PC-3 (cell line): ENCODE measurements at regions of chr7 and their contacts with region 1.

Region 1: DNA sequence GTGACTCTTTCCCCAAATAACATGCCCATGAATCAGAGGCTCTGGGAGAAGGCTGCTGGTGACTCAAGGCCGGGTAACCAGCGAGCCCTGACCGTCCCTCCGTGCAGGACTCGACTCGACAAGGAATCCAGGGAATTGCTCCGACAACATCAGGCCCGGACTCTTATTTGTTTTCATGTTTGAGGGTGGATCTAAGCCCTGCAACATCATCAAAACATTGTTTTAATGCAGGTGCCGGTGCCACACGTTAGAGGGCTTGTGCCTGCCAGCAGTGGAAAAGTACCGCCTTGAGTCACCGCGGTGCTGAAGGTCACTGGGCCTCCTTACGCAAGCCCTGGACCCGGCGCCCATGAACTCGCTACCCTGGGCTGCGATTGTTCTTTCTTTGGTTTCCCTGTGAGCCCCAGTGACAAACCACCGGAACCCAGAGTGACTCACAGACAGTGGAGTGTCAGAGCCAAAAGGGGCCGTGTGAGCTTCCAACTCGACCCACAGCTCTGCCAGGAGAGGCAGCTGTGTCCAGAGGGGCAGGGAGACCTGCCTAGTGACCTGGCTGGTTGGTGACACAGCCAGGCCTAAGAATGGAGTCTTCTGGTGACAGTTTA is 139.4 kb upstream of the SHH start:
- DNase-seq: peak; percentile 96
- ATAC-seq: peak; percentile 85
- H3K4me3 ChIP-seq: peak overlapping the region; percentile 41
- H3K27ac ChIP-seq: peak overlapping the region; percentile 97
- H3K4me1 ChIP-seq: peaks cover 44% of the 10 kb centered on the region
- H3K27me3 ChIP-seq: no peaks in the 10 kb centered on the region
- CTCF ChIP-seq: no peak

Region 2: DNA sequence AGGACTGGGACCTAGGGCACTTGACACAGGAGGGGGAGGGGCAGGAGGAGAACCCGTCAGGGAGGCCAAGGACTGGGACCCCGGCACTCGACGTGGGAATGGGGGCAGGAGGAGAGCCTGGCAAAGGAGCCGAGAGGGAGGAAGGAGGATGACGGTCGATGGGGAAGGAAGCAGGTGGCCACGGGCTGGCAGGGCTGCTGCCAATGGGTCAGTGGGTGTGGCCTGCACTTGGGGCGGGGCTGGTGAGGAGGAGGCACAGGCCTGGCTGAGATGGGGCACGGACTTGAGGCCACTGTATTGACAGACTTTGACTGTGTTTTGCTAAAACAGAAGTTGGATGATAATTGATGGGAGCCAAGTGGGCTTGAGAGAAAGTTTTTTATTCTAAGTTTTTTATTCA is 238.3 kb before region 1 on chr7:
- CTCF ChIA-PET with region 1: no interaction called
- POLR2A ChIA-PET with region 1: no interaction called
- intact Hi-C with region 1: no loop called
- DNase-seq: no peak
- ATAC-seq: no peak; the same call in 1 of the 2 replicates
- H3K4me3 ChIP-seq: no peak overlapping the region
- H3K27ac ChIP-seq: no peak overlapping the region
- H3K4me1 ChIP-seq: no peaks in the 10 kb centered on the region
- H3K27me3 ChIP-seq: no peaks in the 10 kb centered on the region
- CTCF ChIP-seq: no peak

Region 3: DNA sequence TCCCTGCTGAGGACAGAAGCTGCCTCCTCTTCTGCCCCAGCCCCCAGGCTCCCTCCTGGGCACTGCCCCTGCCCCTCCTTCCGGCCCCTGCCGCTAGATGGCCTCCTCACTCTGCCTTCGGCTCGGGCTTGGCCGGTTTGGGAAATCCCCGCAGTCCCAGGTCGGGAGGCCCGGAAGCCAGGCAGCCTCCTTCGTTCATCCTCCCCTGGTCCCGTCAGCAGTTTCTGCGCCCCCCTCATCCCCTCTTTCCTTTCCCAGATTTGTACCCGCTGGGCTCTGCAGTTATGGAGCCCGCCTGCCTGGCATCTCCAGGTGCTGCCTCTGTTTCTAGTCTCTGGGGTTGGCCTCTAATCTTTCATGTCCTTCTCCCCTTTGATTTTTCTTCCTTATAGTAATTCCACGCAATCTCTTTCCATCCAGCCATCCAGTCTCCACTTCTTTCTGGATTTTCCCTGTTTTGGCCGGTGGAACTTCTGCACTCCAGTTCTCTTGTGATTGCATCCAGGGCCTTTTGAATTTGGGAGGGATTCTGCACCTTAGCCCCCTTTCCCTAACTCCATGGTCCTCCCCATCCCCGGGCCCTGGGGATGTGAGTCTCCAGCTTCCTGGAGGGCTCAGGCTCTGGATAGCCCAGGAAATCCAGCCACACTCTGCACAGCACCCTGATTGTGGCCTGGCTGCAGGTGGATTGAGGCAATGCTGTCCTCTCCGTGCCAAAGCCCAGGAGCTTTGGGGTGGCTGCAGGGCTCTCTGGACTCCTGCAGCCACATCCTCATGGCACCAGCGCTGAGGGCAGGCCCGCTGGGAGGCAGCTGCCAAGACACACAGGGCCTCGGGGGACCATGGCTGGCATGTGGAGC is 136.1 kb before region 1 on chr7:
- CTCF ChIA-PET with region 1: interaction called, 3 read pairs
- POLR2A ChIA-PET with region 1: no interaction called
- intact Hi-C with region 1: loop called (anchors 5 kb)
- DNase-seq: peak; percentile 76
- ATAC-seq: peak; percentile 73
- H3K4me3 ChIP-seq: no peak overlapping the region
- H3K27ac ChIP-seq: no peak overlapping the region
- H3K4me1 ChIP-seq: peaks cover 21% of the 10 kb centered on the region
- H3K27me3 ChIP-seq: peaks cover 28% of the 10 kb centered on the region
- CTCF ChIP-seq: peak; percentile 74

Region 4: GRCh38 chr7:155860840-155861479 is 90.7 kb before region 1 on chr7:
- CTCF ChIA-PET with region 1: no interaction called
- POLR2A ChIA-PET with region 1: no interaction called
- intact Hi-C with region 1: loop called (anchors 5 kb)
- DNase-seq: peak; percentile 90
- ATAC-seq: peak; percentile 29
- H3K4me3 ChIP-seq: peak overlapping the region; percentile 44
- H3K27ac ChIP-seq: peak overlapping the region; percentile 66
- H3K4me1 ChIP-seq: peaks cover 42% of the 10 kb centered on the region
- H3K27me3 ChIP-seq: no peaks in the 10 kb centered on the region
- CTCF ChIP-seq: no peak

Region 5: DNA sequence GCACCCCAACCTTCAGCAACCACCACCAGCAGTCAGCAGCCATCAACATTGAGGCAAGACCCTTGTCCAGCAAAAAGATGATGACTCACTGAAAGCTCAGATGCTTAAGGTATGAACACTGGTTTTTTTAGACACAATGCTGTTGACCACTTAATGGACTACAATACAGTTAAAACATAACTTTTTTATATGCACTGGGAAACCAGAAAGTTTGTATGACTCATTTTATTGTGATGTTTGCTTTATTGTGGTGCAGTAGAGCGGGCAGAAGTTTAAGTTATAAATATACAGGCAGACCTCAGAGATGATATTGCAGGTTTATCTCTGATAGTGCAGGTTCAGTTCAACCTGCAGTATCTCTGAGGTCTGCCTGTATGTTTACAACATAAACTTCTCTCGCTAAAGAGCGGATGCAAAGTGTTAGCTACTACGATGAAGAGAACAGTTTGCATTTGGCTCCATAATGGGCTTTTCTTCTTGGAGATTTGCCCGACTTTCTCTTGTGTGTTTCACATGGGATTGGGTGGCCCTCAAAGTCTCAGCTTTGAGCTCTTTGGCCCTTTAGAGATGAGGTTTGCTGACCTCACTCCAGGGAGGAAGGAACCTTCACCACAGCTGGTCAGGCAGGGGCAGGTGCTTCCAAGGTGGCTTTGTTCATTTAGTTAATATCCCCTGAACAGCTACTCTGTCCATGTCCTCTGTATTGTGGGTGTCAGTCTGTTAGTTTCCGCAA is 55.0 kb before region 1 on chr7:
- CTCF ChIA-PET with region 1: no interaction called
- POLR2A ChIA-PET with region 1: no interaction called
- intact Hi-C with region 1: loop called (anchors 2 kb)
- DNase-seq: peak; percentile 88
- ATAC-seq: peak; percentile 95
- H3K4me3 ChIP-seq: 0 out of 2 replicates have a peak overlapping the region, but pooled peaks have one; percentile 12
- H3K27ac ChIP-seq: peak overlapping the region; percentile 19; the same call in 1 of the 2 replicates
- H3K4me1 ChIP-seq: peaks cover 23% of the 10 kb centered on the region
- H3K27me3 ChIP-seq: no peaks in the 10 kb centered on the region
- CTCF ChIP-seq: no peak

Region 6: GRCh38 chr7:155983176-155983815 is 31.6 kb after region 1 on chr7:
- CTCF ChIA-PET with region 1: no interaction called
- POLR2A ChIA-PET with region 1: no interaction called
- intact Hi-C with region 1: no loop called
- DNase-seq: no peak
- ATAC-seq: no peak
- H3K4me3 ChIP-seq: no peak overlapping the region
- H3K27ac ChIP-seq: no peak overlapping the region
- H3K4me1 ChIP-seq: no peaks in the 10 kb centered on the region
- H3K27me3 ChIP-seq: peaks cover 29% of the 10 kb centered on the region
- CTCF ChIP-seq: no peak

Region 7: GRCh38 chr7:156039971-156040677 is 88.5 kb after region 1 on chr7:
- CTCF ChIA-PET with region 1: no interaction called
- POLR2A ChIA-PET with region 1: no interaction called
- intact Hi-C with region 1: loop called (anchors 2 kb)
- DNase-seq: no peak
- ATAC-seq: no peak
- H3K4me3 ChIP-seq: no peak overlapping the region
- H3K27ac ChIP-seq: no peak overlapping the region
- H3K4me1 ChIP-seq: peaks cover 21% of the 10 kb centered on the region
- H3K27me3 ChIP-seq: no peaks in the 10 kb centered on the region
- CTCF ChIP-seq: no peak

Region 8: GRCh38 chr7:156156734-156157610 is 205.3 kb after region 1 on chr7:
- CTCF ChIA-PET with region 1: no interaction called
- POLR2A ChIA-PET with region 1: no interaction called
- intact Hi-C with region 1: loop called (anchors 1 kb)
- DNase-seq: peak; percentile 70
- ATAC-seq: peak; percentile 90
- H3K4me3 ChIP-seq: no peak overlapping the region
- H3K27ac ChIP-seq: no peak overlapping the region
- H3K4me1 ChIP-seq: peaks cover 11% of the 10 kb centered on the region; the same call in 1 of the 2 replicates
- H3K27me3 ChIP-seq: no peaks in the 10 kb centered on the region
- CTCF ChIP-seq: peak; percentile 68